ENCODE measurements at regions of chr4 and their contacts with region 1.

Region 1: GRCh38 chr4:173318648-173319211 is 15.4 kb downstream of the HMGB2 start:
- DNase-seq: no peak
- ATAC-seq: peak in 3 of 4 donors; percentile 64 to 81 (median 74)
- H3K4me3 ChIP-seq: no peak overlapping the region
- H3K27ac ChIP-seq: no peak overlapping the region
- H3K4me1 ChIP-seq: peaks cover 0 to 4% (median 0%) of the 10 kb centered on the region in 3 donors
- H3K27me3 ChIP-seq: no peaks in the 10 kb centered on the region
- CTCF ChIP-seq: peak in 2 of 4 donors; percentile 20 to 34

Region 2: GRCh38 chr4:173413036-173413435 is 94.3 kb after region 1 on chr4:
- intact Hi-C with region 1: loop called (anchors 5 to 10 kb)
- DNase-seq: no peak
- ATAC-seq: no peak
- H3K4me3 ChIP-seq: no peak overlapping the region
- H3K27ac ChIP-seq: no peak overlapping the region
- H3K4me1 ChIP-seq: peaks cover 0 to 3% (median 2%) of the 10 kb centered on the region in 3 donors
- H3K27me3 ChIP-seq: no peaks in the 10 kb centered on the region
- CTCF ChIP-seq: no peak